ENCODE measurements at regions of chr6 and their contacts with region 1.

Region 1: DNA sequence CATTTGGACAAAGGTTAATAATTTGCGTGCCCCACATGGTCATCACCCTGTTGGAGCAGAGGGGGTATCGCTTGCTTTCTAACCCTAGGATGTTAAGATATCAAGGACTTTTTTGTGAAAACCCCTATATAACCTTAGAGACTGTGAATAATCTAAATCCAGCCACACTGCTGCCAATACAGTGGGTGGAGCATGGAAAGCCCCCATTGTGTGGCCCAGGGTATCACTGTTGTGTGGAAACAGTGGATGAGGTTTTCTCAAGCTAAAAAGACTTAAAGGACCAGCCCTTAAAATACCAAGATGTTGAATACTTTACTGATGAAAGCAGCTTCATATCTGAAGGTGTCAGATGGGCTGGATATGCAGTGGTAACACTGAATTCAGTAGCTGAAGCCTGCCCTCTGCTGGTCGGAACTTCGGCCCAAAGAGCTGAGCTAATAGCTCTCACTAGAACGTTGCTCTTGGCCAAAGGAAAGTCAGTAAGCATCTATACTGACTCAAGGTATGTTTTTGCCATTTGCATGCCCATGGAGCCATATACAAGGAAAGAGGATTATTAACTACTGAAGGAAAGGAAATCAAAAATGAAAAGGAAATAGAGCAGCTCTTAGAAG is 695.2 kb downstream of the PHF3 start:
- DNase-seq: peak; percentile 27
- ATAC-seq: peak; percentile 74; the same call in 1 of the 2 replicates
- H3K4me3 ChIP-seq: no peak overlapping the region
- H3K27ac ChIP-seq: no peak overlapping the region
- H3K4me1 ChIP-seq: no peaks in the 10 kb centered on the region
- H3K27me3 ChIP-seq: no peaks in the 10 kb centered on the region
- CTCF ChIP-seq: peak; percentile 67

Region 2: DNA sequence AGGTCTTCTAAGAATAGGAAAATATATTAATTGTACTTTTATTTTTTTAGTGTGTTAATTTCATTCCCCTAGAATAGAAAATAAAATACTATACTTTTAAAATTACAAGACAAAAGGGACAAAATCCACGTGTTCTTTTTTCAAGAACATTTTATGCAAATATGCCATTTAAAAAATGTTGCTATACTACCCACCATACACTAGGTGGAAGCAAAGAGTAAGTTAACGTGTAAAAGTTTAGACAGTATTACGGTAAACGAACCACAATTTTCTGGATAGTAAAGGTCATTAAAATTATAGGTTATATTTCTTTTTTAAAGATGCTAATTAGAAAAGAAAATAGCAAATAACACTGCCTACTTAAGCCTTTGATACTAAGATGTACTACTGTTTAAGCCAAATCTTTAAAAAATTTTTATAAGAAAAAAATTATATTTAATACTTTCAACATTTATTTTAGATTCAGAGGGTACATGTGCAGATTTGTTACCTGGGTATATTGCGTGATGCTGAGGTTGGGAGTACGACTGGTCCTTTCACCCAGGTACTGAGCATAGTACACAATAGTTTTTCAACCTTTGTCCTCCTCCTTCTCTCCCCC is 407.6 kb before region 1 on chr6:
- CTCF ChIA-PET with region 1: no interaction called
- POLR2A ChIA-PET with region 1: no interaction called
- in situ Hi-C with region 1: no loop called
- intact Hi-C with region 1: loop called (anchors 2 kb)
- DNase-seq: no peak
- ATAC-seq: peak; percentile 68
- H3K4me3 ChIP-seq: no peak overlapping the region
- H3K27ac ChIP-seq: no peak overlapping the region
- H3K4me1 ChIP-seq: no peaks in the 10 kb centered on the region
- H3K27me3 ChIP-seq: no peaks in the 10 kb centered on the region; the same call in 1 of the 2 replicates
- CTCF ChIP-seq: peak; percentile 23; the same call in 1 of the 2 replicates

Region 3: DNA sequence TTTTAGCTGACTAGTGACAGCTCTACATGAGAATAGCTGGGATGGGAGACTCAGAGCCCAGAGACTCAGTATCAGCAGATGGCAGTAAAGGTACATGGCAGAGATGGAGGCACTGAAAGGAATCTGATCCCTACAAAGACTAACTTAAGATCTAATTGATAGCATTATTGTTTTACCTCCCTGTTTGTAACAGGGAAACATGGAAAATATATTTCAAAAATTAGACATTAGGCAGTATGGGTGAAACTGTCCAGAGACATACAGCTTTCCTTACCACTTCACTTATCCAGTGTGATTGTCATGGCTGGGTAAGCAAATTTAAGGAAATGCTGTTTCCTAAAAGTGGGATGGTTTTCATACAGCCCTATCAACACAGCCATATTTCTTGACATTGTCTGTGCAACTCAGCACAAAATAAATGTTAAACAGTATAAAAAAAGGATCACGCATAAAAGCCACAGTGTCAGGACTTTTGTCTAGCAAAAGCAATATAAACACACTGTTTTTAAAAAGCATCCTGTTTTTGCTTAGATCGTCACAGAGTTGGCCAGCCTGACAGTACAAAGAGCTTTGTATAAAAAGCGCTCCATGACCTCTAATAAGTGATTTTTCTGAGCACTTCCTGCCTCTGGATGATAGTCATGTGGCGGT is 318.3 kb before region 1 on chr6:
- CTCF ChIA-PET with region 1: interaction called, 4 read pairs
- POLR2A ChIA-PET with region 1: no interaction called
- in situ Hi-C with region 1: no loop called
- intact Hi-C with region 1: loop called (anchors 1 kb)
- DNase-seq: peak; percentile 55
- ATAC-seq: peak; percentile 69; the same call in 1 of the 2 replicates
- H3K4me3 ChIP-seq: no peak overlapping the region
- H3K27ac ChIP-seq: no peak overlapping the region
- H3K4me1 ChIP-seq: no peaks in the 10 kb centered on the region
- H3K27me3 ChIP-seq: no peaks in the 10 kb centered on the region
- CTCF ChIP-seq: peak; percentile 73